A549 (cell line): ENCODE measurements at regions of chr19 and their contacts with region 1.

Region 1: GRCh38 chr19:11293433-11294389 is 2.2 kb upstream of the TSPAN16 start:
- DNase-seq: peak; percentile 79 to 93
- ATAC-seq: peak; percentile 99
- H3K4me3 ChIP-seq: peak overlapping the region; percentile 39
- H3K27ac ChIP-seq: peak overlapping the region; percentile 78 to 79
- H3K4me1 ChIP-seq: peaks cover 10% of the 10 kb centered on the region; the same call in 1 of the 3 replicates
- CTCF ChIP-seq: peak; percentile 84
- EP300 ChIP-seq: no peak
- POLR2A ChIP-seq: peak; percentile 55
- RAD21 ChIP-seq: peak; percentile 90 to 96

Region 2: DNA sequence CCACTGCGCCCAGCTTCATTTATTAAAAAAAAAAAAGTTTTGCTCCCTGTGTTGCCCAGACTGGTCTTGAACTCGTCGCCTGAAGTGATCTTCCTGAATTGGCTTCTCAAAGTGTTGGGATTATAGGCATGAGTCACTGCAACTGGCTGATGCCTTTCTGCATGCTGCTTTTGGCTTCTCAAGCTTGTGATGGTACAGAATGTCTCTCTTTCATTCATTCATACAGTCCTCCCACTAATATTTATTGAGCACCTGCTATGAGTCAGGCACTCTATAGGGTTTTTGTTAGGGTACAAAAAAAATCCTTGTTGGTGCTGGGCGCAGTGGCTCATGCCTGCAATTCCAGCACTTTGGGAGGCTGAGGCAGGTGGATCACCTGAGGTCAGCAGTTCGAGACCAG is 11.2 kb after region 1 on chr19:
- CTCF ChIA-PET with region 1: interaction called, 10 read pairs
- POLR2A ChIA-PET with region 1: no interaction called
- DNase-seq: no peak
- ATAC-seq: no peak
- H3K4me3 ChIP-seq: no peak overlapping the region
- H3K27ac ChIP-seq: no peak overlapping the region
- H3K4me1 ChIP-seq: no peaks in the 10 kb centered on the region
- CTCF ChIP-seq: no peak
- EP300 ChIP-seq: no peak
- POLR2A ChIP-seq: no peak
- RAD21 ChIP-seq: no peak

Region 3: DNA sequence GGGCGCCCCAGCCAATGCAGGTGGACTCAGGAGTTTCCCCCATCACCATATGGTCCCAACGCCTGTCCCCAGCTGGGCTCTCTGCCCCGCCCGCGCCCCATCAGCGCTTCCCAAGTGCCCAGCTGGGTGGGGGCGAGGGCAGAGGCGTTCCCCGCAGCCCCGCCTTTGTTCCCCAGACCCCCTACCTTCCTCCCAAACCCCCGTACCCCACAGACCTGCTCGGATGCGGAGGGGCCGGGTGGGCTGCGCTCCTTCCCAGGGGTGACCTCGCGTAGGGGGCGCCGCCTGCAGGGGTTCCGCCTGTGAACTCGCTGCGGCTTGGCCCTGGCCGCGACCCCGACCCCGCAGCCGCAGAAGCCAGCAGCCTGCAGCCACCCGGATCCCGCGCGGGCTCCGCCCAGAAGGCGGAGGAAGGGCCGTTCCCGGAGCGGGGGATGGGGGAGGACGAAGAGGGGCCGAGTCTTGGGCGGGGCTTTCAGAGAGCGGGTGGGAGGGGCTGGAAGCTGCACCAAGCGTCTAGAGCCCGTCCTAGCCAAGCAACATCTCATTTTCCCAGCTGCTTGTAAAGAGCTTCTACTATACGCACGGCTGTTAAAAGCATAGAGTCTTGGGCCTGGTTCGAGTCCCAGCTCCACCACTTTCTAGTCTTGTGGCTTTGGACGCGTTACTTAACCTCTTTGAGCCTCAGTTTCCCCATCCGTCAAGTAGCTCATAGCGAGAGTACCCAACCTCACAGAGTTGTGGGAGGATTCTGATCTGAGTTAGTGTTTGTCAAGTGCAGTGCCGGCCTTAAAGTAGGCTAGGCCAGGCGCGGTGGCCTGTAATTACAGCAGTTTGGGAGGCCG is 45.8 kb after region 1 on chr19 and contains the start of gene RAB3D:
- CTCF ChIA-PET with region 1: interaction called, 13 read pairs
- POLR2A ChIA-PET with region 1: interaction called, 6 read pairs
- DNase-seq: peak; percentile 85
- ATAC-seq: peak; percentile 87 to 95
- H3K4me3 ChIP-seq: peak within 1 kb of the TSS; percentile 89
- H3K27ac ChIP-seq: peak within 1 kb of the TSS; percentile 91 to 95
- H3K4me1 ChIP-seq: peaks cover 25% of the 10 kb centered on the region
- CTCF ChIP-seq: no peak
- EP300 ChIP-seq: no peak
- POLR2A ChIP-seq: peak; percentile 43; the same call in 1 of the 2 replicates
- RAD21 ChIP-seq: no peak
- polyA plus RNA-seq, gene RAB3D: 22.3 and 26.8 TPM in 2 replicates

Region 4: GRCh38 chr19:11346092-11346940 is 52.6 kb after region 1 on chr19 and contains the starts of genes CCDC159 and TMEM205:
- CTCF ChIA-PET with region 1: interaction called, 13 read pairs
- POLR2A ChIA-PET with region 1: interaction called, 4 read pairs
- DNase-seq: peak; percentile 89 to 97
- ATAC-seq: peak; percentile 82 to 91
- H3K4me3 ChIP-seq: peak within 1 kb of the TSS; percentile 90
- H3K27ac ChIP-seq: peak within 1 kb of the TSS; percentile 79 to 98
- H3K4me1 ChIP-seq: peaks cover 28% of the 10 kb centered on the region
- CTCF ChIP-seq: no peak
- EP300 ChIP-seq: no peak
- POLR2A ChIP-seq: peak; percentile 72
- RAD21 ChIP-seq: no peak
- polyA plus RNA-seq, gene CCDC159: 11.3 and 12.2 TPM in 2 replicates
- polyA plus RNA-seq, gene TMEM205: 183 and 230 TPM in 2 replicates

Region 5: GRCh38 chr19:11374433-11375142 is 80.9 kb after region 1 on chr19 and contains the start of gene SWSAP1:
- CTCF ChIA-PET with region 1: interaction called, 28 read pairs
- POLR2A ChIA-PET with region 1: interaction called, 32 read pairs
- DNase-seq: peak; percentile 98 to 99
- ATAC-seq: peak; percentile 94 to 95
- H3K4me3 ChIP-seq: peak within 1 kb of the TSS; percentile 47
- H3K27ac ChIP-seq: peak within 1 kb of the TSS; percentile 92 to 93
- H3K4me1 ChIP-seq: peaks cover 46% of the 10 kb centered on the region
- CTCF ChIP-seq: no peak
- EP300 ChIP-seq: no peak
- POLR2A ChIP-seq: peak; percentile 60
- RAD21 ChIP-seq: no peak
- polyA plus RNA-seq, gene SWSAP1: 1.2 and 1.3 TPM in 2 replicates

Region 6: GRCh38 chr19:11446652-11447301 is 153.1 kb after region 1 on chr19:
- CTCF ChIA-PET with region 1: interaction called, 11 read pairs
- POLR2A ChIA-PET with region 1: no interaction called
- DNase-seq: peak; percentile 40 to 70
- ATAC-seq: peak; percentile 83 to 93; a peak in 5 of 6 replicates
- H3K4me3 ChIP-seq: no peak overlapping the region
- H3K27ac ChIP-seq: no peak overlapping the region
- H3K4me1 ChIP-seq: no peaks in the 10 kb centered on the region
- CTCF ChIP-seq: peak; percentile 62
- EP300 ChIP-seq: no peak
- POLR2A ChIP-seq: no peak
- RAD21 ChIP-seq: peak; percentile 76 to 77

Region 7: DNA sequence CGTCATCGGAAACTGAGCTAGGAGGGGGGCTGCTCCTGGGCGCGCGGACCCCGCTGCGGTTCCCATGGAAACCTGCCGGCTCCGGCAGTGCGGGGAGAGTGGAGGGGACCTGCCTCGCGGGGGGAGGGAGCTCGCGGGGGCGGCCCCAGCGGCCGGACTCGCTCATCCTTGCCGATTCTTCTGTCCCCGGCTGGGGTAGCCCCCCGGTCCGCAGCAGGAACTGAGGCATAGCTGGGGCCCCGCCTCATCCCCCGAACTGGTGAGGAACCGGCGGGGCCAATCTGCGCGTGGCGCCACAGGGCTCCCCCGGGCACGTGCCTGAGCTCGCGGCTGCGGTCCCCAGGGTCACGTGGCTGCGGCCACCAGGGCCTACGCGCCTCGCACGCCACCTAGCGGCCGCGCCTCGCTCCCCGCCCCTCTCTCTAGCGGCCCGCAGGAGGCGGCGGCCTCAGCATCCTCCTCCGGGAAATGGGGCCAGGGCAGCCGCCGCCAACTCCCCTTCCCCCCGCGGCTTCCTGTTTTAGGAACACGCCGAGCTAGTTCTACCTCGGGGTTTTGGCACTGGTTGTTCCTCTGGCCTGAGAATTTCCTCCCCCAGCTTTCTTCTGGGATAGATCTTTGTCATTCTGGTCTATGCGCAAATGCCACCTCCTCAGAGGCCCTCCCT is 188.8 kb after region 1 on chr19:
- CTCF ChIA-PET with region 1: interaction called, 34 read pairs
- POLR2A ChIA-PET with region 1: interaction called, 3 read pairs
- DNase-seq: peak; percentile 75 to 84
- ATAC-seq: peak; percentile 69 to 86
- H3K4me3 ChIP-seq: peak overlapping the region; percentile 64
- H3K27ac ChIP-seq: peak overlapping the region; percentile 81 to 91
- H3K4me1 ChIP-seq: 0 out of 3 replicates have a peak, but pooled peaks cover 3% of the 10 kb centered on the region
- CTCF ChIP-seq: peak; percentile 84
- EP300 ChIP-seq: no peak
- POLR2A ChIP-seq: no peak
- RAD21 ChIP-seq: peak; percentile 64 to 87; a peak in 4 of 5 replicates